Activated CD4-positive, alpha-beta T cell treated with anti-CD3 and anti-CD28 coated beads, Interleukin-2, amount 10 ng/mL, durations not matched to agents 24 days and 14 days (primary cell): ENCODE measurements at regions of chr6 and their contacts with region 1.

Region 1: GRCh38 chr6:8983188-8983688 is 547.9 kb upstream of the SLC35B3 start:
- DNase-seq: peak; percentile 86
- H3K4me3 Mint-ChIP-seq: no peak overlapping the region
- H3K27ac Mint-ChIP-seq: no peak overlapping the region
- H3K4me1 Mint-ChIP-seq: no peaks in the 10 kb centered on the region
- H3K27me3 Mint-ChIP-seq: no peaks in the 10 kb centered on the region

Region 2: GRCh38 chr6:9002833-9003232 is 19.6 kb after region 1 on chr6:
- intact Hi-C with region 1: no loop called
- DNase-seq: no peak
- H3K4me3 Mint-ChIP-seq: no peak overlapping the region
- H3K27ac Mint-ChIP-seq: no peak overlapping the region
- H3K4me1 Mint-ChIP-seq: no peaks in the 10 kb centered on the region
- H3K27me3 Mint-ChIP-seq: no peaks in the 10 kb centered on the region

Region 3: GRCh38 chr6:9412951-9413559 is 429.8 kb after region 1 on chr6:
- intact Hi-C with region 1: loop called (anchors 5 kb)
- DNase-seq: peak; percentile 57
- H3K4me3 Mint-ChIP-seq: no peak overlapping the region
- H3K27ac Mint-ChIP-seq: no peak overlapping the region
- H3K4me1 Mint-ChIP-seq: no peaks in the 10 kb centered on the region
- H3K27me3 Mint-ChIP-seq: no peaks in the 10 kb centered on the region

Region 4: DNA sequence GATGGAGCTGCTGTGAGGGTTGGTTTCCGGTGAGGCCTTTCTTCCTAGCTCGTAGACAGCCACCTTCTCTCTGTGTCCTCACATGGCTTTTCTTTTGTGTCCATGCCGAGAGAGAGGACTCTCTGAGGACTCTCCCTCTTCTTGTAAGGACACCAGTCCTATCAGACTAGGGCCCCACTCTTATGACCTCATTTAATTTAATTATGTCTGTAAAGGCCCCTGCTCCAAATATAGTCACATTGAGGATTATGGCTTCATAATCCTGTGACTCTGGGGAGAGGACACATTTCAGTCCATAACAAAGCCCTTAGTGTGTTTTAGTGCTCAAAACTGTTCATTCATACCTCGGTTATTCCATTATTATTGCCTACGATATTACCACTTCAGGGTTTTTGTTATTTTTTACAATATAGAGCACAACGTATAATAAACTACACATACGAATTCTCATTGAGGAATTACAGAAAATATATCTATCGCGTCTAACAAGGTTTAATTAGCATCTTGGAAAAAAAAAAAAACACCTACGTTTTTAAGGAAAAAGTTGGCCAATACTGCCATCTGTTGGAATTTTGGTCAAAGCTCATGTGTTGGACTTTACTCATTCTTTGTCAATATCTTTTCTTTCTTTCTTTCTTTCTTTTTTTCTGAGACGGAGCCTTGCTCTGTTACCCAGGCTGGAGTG is 1451.6 kb after region 1 on chr6:
- intact Hi-C with region 1: loop called (anchors 2 kb)
- DNase-seq: peak; percentile 65
- H3K4me3 Mint-ChIP-seq: no peak overlapping the region
- H3K27ac Mint-ChIP-seq: no peak overlapping the region
- H3K4me1 Mint-ChIP-seq: peaks cover 12% of the 10 kb centered on the region
- H3K27me3 Mint-ChIP-seq: peaks cover 2% of the 10 kb centered on the region